Psoas muscle (tissue), 8 donors: ENCODE measurements at regions of chr1 and their contacts with region 1.

Region 1: DNA sequence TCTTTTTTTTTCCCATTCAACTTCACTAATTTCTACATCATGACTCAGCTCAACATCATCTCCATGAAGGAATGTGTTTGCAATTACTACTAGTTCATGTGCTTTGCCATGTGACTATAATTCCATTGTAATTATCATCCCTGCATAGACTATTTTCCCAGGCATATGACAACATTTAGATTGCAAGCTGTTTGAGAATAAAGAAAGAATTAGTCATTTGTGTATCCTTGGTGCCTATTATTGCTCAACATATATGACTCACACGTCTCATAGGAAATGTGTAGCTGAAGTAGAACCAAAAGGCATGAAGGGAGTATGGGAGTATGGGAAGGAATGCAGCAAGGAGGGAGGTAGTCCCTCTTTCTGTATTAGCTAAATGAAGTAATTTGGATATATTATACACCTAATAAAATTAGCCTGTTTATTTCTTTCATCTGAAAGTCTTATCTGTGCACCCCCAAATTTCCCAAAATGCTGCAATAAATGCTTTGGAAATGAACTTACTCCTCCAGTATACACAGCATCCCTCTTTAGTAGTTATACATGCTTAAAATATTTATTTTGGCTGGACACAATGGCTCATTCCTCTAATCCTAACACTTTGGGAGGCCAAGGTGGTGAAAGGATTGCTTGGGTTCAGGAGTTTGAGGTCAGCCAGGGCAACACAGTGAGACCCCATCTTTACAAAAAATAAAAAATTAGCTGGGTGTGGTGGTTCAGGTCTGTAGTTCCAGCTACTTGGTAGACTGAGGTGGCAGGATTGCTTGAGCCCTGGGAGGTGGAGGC is 316.9 kb upstream of the ADGRL4 start:
- DNase-seq: no peak
- ATAC-seq: no peak
- H3K4me3 ChIP-seq: no peak overlapping the region
- H3K27ac ChIP-seq: no peak overlapping the region
- H3K4me1 ChIP-seq: no peaks in the 10 kb centered on the region
- H3K27me3 ChIP-seq: no peaks in the 10 kb centered on the region
- CTCF ChIP-seq: no peak

Region 2: GRCh38 chr1:79283456-79283855 is 40.0 kb before region 1 on chr1:
- intact Hi-C with region 1: no loop called
- DNase-seq: no peak
- ATAC-seq: no peak
- H3K4me3 ChIP-seq: no peak overlapping the region
- H3K27ac ChIP-seq: no peak overlapping the region
- H3K4me1 ChIP-seq: no peaks in the 10 kb centered on the region
- H3K27me3 ChIP-seq: no peaks in the 10 kb centered on the region
- CTCF ChIP-seq: no peak

Region 3: GRCh38 chr1:79364896-79365295 is 41.5 kb after region 1 on chr1:
- intact Hi-C with region 1: loop called in 1 of 2 experiments (anchors 2 kb)
- DNase-seq: no peak
- ATAC-seq: no peak
- H3K4me3 ChIP-seq: no peak overlapping the region
- H3K27ac ChIP-seq: no peak overlapping the region
- H3K4me1 ChIP-seq: no peaks in the 10 kb centered on the region
- H3K27me3 ChIP-seq: no peaks in the 10 kb centered on the region
- CTCF ChIP-seq: no peak